ENCODE measurements at regions of chr10 and their contacts with region 1.

Region 1: DNA sequence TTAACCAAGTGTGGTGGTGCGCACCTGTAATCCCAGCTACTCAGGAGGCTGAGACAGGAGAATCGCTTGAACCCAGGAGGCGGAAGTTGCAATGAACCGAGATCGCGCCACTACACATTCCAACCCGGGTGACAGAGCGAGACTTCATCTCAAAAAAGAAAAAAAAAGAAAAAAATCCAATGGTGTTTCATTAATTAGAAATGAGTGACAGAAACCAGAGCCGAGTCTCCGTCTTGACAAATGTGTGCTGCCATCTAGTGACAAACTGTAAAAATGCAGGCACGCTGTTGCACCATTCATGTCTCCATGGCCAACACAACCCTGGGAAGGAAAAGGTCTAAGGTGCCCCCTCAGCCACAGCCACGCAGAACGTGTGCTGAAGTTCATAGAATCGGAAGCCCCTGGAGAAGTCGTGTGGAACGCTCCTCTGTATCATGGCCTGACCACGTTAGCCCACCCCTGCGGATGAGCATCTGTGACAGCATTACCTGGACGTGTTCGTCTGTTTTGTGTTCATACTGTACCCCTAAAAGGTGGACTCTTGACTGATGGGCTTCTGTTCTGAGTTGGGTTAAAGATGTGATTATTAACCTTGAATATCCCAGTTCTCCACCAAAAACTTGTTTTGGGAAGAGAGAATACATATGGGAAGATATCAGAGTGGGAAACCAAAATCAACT is 94.9 kb downstream of the LYZL2 start:
- DNase-seq: peak; percentile 28 to 90
- H3K4me3 ChIP-seq: no peak overlapping the region
- H3K27ac ChIP-seq: no peak overlapping the region
- H3K4me1 ChIP-seq: no peaks in the 10 kb centered on the region
- H3K27me3 ChIP-seq: no peaks in the 10 kb centered on the region
- CTCF ChIP-seq: peak; percentile 86 to 95 (median 93)

Region 2: DNA sequence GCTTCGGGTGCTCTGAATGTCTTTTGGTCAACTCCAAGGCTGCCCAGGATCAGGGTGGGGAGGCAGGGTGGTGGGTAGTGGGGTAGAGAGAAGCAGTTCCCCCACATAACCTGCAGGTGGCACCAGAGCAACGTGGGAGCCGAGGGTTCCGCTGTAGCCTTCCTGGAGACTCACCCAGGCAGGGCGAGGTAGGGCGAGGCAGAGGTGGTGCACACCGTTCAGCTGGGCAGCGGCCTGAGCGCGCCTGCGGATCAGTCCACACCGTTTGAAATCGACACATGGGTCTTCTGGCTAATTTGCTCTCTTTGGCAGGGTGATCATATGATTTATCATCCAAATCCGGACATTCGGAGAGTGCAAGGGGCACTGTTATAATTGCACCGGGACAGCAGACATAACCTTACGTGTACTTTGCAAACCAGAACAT is 142.0 kb before region 1 on chr10:
- intact Hi-C with region 1: loop called (anchors 1 kb)
- DNase-seq: peak in 1 of 2 donors; percentile 80
- H3K4me3 ChIP-seq: peak overlapping the region in 1 of 2 donors; percentile 1
- H3K27ac ChIP-seq: no peak overlapping the region
- H3K4me1 ChIP-seq: peaks cover 0 to 8% of the 10 kb centered on the region in 2 donors
- H3K27me3 ChIP-seq: no peaks in the 10 kb centered on the region
- CTCF ChIP-seq: peak; percentile 87 to 96 (median 93)

Region 3: GRCh38 chr10:30553625-30554439 is 19.2 kb after region 1 on chr10:
- intact Hi-C with region 1: no loop called
- DNase-seq: peak; percentile 31 to 80
- H3K4me3 ChIP-seq: peak overlapping the region in 1 of 2 donors; percentile 41
- H3K27ac ChIP-seq: peak overlapping the region; percentile 48 to 60
- H3K4me1 ChIP-seq: peaks cover 0 to 5% of the 10 kb centered on the region in 2 donors
- H3K27me3 ChIP-seq: no peaks in the 10 kb centered on the region
- CTCF ChIP-seq: no peak

Region 4: DNA sequence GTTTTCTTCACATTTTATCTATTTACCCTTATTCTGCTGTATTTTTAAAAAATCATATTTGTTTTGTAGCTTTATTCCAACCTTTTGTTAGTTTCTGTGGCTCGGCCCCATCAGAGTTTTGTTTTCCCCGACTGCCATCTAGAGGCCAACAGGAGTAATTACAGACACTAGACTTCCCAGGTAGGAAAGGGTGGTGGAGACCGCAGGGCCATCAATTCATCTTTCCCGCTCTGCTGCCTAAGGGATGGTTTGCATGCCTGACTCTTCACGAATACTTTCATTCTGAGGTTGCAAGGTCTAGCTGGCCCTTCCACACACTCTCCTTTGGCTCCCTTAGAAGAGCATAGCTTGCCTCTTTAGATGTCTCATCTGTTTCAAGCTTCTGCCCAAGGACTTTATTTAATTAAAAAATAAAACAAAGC is 56.7 kb after region 1 on chr10:
- intact Hi-C with region 1: loop called (anchors 2 kb)
- DNase-seq: no peak
- H3K4me3 ChIP-seq: no peak overlapping the region
- H3K27ac ChIP-seq: no peak overlapping the region
- H3K4me1 ChIP-seq: no peaks in the 10 kb centered on the region
- H3K27me3 ChIP-seq: no peaks in the 10 kb centered on the region
- CTCF ChIP-seq: peak; percentile 79 to 83 (median 79)

Measured in ascending aorta (tissue), 2 donors.